ENCODE measurements at regions of chr13 and their contacts with region 1.

Region 1: GRCh38 chr13:99228737-99229691 is 28.4 kb downstream of the UBAC2 start:
- DNase-seq: peak; percentile 65
- H3K4me3 Mint-ChIP-seq: peak overlapping the region; percentile 79
- H3K27ac Mint-ChIP-seq: peak overlapping the region; percentile 86
- H3K4me1 Mint-ChIP-seq: peaks cover 50% of the 10 kb centered on the region
- H3K27me3 Mint-ChIP-seq: no peaks in the 10 kb centered on the region

Region 2: DNA sequence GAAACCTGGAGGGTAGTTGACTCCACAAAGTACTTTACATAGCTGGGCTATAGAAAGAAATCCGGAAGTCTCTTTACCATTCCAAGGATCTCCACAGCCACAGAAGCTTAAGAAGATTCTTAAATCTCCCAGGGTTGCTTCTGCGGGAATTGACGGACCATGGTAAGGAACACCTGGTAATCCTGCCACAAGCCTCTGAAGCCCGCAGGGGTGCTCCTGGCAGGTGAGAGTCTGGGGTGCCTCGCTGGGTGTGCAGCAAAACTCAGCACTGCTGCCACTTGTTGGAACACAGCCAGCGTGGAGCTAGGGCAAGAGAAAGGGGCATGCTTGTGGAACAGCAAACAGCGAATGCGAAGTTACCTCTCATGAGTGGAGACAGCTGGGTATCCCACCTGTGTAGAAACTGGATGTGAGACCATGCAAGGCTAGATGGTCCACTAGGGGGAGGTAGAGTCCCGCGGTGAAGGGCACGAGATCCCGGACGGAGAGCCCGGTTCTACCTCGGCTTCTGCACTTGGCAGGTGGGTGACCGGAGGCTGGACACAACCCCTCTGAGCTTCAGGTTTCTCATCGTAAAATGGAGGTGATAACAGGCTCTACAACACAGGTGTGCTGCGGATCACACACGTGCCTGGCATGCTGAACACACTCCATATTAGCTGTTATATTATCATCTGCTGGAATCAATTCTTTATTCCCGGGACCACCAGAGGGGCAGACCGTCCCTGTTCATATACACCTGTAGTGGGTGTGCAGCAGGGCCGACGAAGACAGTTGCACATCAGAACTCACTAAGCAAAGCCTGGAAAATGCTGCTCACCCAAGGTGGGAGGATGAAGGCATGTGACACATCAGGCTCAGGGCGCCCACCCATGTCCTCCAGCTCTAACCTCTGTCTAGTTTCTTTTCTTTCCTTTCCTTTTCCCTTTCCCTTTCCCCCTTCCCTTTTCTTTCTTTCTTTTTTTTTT is 52.4 kb before region 1 on chr13:
- intact Hi-C with region 1: loop called (anchors 1 kb)
- DNase-seq: peak; percentile 93
- H3K4me3 Mint-ChIP-seq: peak overlapping the region; percentile 57
- H3K27ac Mint-ChIP-seq: no peak overlapping the region
- H3K4me1 Mint-ChIP-seq: peaks cover 31% of the 10 kb centered on the region
- H3K27me3 Mint-ChIP-seq: peaks cover 9% of the 10 kb centered on the region

Region 3: DNA sequence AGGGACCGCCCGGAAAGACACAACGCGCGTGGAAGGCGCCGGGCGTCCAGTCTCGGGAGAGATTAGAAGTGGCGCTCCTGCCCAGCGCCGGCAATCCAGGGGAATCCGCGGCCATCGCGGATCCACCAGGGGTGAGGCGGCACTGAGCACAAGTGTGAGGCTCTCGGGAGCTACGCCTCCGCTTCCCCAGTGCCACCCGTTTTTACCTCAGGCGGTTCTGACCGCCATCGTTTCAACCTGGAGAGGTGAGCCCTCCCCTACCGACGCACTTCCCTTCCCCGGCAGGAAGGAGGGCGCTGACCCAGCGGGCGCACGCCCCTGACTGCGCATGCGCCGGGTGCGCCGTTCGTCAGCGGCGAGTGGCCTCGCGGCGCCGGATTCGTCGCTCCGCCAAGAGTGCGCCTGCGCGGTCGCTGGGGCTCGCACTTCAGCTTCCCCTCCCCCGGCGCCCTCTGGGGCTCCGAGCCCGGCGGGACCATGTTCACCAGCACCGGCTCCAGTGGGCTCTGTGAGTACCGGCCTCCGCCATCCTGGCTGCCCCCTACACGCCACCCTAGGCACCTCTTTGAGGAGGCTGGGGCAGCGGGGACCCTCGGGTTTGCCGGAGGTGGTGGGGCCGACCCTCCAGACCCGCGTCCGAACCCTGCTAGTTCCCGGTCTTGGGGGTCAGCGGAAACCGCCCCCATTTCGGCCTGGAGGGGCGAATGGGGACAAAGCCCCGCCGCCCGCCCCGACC is 28.4 kb before region 1 on chr13 and contains the start of gene UBAC2:
- intact Hi-C with region 1: loop called (anchors 1 kb)
- DNase-seq: peak; percentile 99
- H3K4me3 Mint-ChIP-seq: peak within 1 kb of the TSS; percentile 97
- H3K27ac Mint-ChIP-seq: peak within 1 kb of the TSS; percentile 97
- H3K4me1 Mint-ChIP-seq: peaks cover 46% of the 10 kb centered on the region
- H3K27me3 Mint-ChIP-seq: no peaks in the 10 kb centered on the region
- total RNA-seq, gene UBAC2: 52.6 and 52.8 TPM in 2 replicates

Region 4: DNA sequence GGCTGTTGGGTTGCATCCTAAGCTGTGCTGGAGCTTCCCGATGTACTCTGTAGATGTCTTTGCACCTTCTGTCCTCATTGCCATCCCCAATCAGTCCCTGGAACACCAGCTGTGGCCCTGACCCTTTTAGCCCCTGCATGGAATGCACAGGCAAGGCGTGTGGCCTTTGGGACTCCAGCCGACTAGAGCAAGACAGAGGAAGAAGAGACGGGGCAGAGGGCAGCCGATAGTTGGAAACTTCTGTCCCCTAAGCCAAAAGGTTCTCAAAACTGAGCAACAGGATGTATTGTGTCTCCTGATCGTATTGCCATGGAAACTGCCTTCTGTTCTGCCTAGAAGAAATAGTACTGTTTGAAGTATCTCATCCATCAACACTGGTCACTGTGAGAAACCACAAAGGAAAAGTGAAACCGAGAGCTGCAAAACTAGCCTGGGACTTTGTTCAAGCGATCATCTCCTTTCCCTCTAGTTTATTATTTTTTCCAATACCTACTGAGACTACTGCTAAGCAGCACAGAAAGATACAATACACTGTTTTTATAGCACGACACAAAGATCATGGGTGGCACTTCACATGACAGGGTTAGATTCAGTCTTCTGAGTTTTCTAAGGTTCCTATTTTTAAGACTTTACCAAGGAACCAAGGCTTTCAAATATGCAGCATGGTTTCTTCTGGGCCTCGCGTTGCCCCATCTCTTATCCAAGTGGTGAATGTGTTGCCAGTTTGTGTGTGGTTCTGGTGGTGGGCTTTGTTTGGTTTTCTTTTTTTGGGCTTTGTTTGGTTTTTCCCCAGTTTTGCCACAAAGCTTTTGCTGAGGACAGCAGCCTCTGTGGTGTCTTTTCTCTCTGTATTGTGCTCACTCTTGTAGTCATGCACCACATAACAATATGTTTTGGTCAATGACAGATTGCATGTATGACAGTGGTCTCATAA is 127.4 kb after region 1 on chr13:
- intact Hi-C with region 1: no loop called
- DNase-seq: peak; percentile 94
- H3K4me3 Mint-ChIP-seq: peak overlapping the region; percentile 83
- H3K27ac Mint-ChIP-seq: peak overlapping the region; percentile 99
- H3K4me1 Mint-ChIP-seq: peaks cover 92% of the 10 kb centered on the region
- H3K27me3 Mint-ChIP-seq: no peaks in the 10 kb centered on the region

Measured in activated CD4-positive, alpha-beta T cell treated with anti-CD3 and anti-CD28 coated beads, Interleukin-2, amount 10 ng/mL, durations not matched to agents 24 days and 14 days (primary cell).